Activated naive CD4-positive, alpha-beta T cell treated with anti-CD3 and anti-CD28 coated beads for 36 hours (primary cell): ENCODE measurements at regions of chr2 and their contacts with region 1.

Region 1: GRCh38 chr2:118882709-118883210 is 35.3 kb upstream of the EN1 start:
- DNase-seq: peak; percentile 70
- H3K4me3 Mint-ChIP-seq: peak overlapping the region; percentile 46
- H3K27ac Mint-ChIP-seq: no peak overlapping the region
- H3K4me1 Mint-ChIP-seq: peaks cover 7% of the 10 kb centered on the region
- H3K27me3 Mint-ChIP-seq: peaks cover 19% of the 10 kb centered on the region

Region 2: DNA sequence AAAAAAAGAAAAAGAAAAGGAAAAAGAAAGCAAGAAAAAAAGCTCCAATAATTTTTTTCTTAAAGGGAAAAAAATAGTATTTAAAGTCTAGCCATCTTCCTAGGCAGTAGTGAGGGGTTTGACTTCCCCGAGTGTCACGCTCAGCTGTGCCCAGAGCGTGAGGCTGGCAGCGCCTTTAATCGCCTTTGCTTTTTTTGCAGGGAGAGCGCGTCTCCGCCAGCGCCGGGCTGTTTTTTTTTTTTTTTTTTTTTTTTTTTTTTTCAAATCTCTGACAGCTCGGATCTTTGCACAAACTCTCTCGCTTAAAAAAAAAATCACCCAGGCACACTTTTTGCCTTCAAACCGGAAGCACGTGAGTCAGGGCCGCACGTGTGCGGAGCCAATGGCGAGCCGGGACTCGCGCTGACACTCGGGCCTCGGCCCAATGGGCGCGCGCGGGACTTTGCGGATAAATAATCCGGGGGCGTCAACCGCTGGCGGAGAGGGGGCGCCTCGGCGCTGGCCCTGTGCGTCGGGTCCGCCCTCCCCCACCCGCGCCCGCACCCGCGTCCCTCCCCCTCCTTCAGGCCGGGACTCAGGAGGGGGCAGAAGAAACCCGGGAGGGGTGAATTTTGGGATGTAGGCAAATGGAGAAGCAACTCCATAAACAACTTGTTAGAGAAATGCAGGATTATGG is 35.1 kb before region 1 on chr2 and contains the start of gene EN1:
- CTCF ChIA-PET with region 1: no interaction called
- intact Hi-C with region 1: no loop called
- DNase-seq: peak; percentile 40
- H3K4me3 Mint-ChIP-seq: peak within 1 kb of the TSS; percentile 52
- H3K27ac Mint-ChIP-seq: no peak within 1 kb of the TSS
- H3K4me1 Mint-ChIP-seq: peaks cover 37% of the 10 kb centered on the region
- H3K27me3 Mint-ChIP-seq: peaks cover 79% of the 10 kb centered on the region
- total RNA-seq, gene EN1: not detected

Region 3: GRCh38 chr2:119006441-119006840 is 123.7 kb after region 1 on chr2:
- CTCF ChIA-PET with region 1: interaction called, 3 read pairs
- intact Hi-C with region 1: loop called (anchors 2 kb)
- DNase-seq: no peak
- H3K4me3 Mint-ChIP-seq: no peak overlapping the region
- H3K27ac Mint-ChIP-seq: no peak overlapping the region
- H3K4me1 Mint-ChIP-seq: no peaks in the 10 kb centered on the region
- H3K27me3 Mint-ChIP-seq: peaks cover 12% of the 10 kb centered on the region

Region 4: GRCh38 chr2:119174216-119175037 is 291.7 kb after region 1 on chr2:
- CTCF ChIA-PET with region 1: interaction called, 21 read pairs
- intact Hi-C with region 1: loop called (anchors 1 kb)
- DNase-seq: peak; percentile 57
- H3K4me3 Mint-ChIP-seq: no peak overlapping the region
- H3K27ac Mint-ChIP-seq: no peak overlapping the region
- H3K4me1 Mint-ChIP-seq: no peaks in the 10 kb centered on the region
- H3K27me3 Mint-ChIP-seq: no peaks in the 10 kb centered on the region

Region 5: DNA sequence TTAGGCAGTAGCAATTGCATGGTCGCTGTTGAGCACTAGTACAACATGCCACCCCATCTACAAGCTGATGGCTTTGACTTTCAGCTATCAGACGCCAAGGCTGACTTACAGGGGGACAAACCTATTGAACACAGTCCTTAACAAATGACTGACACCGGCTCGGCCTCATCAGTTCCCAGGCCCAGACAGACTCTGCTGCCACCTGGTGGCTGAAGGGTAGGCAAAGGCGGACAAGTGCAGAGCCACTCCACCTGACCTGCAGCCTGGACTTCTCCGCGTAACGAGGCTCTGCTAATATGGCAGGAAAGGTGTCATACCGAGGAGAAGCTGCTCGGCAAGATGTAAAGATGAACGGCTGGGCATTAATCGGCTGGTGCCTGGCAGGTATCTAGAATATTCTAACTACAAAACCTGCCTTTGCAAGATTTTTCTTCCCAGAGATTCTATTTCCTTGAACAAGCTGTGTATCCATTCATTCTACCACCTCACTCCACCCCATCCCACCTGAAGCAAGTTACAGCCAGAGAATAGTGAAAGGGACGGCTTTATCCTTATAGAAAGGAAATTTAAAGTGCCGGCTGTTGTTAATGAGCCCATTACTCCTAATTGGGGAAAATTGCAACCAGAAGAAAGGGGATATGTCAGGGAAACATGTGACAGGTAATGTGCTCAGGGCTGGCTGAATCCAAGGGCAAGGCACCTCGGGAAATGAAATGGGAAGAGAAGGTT is 408.3 kb after region 1 on chr2:
- CTCF ChIA-PET with region 1: interaction called, 18 read pairs
- intact Hi-C with region 1: loop called (anchors 1 kb)
- DNase-seq: peak; percentile 79
- H3K4me3 Mint-ChIP-seq: no peak overlapping the region
- H3K27ac Mint-ChIP-seq: no peak overlapping the region
- H3K4me1 Mint-ChIP-seq: peaks cover 3% of the 10 kb centered on the region
- H3K27me3 Mint-ChIP-seq: no peaks in the 10 kb centered on the region